Activated CD4-positive, alpha-beta T cell treated with anti-CD3 and anti-CD28 coated beads for 36 hours (primary cell): ENCODE measurements at regions of chr22 and their contacts with region 1.

Region 1: GRCh38 chr22:31329453-31330215 is 16.5 kb downstream of the PATZ1 start:
- DNase-seq: no peak
- ATAC-seq: peak; percentile 98
- H3K4me3 Mint-ChIP-seq: no peak overlapping the region
- H3K27ac Mint-ChIP-seq: peak overlapping the region; percentile 71
- H3K4me1 Mint-ChIP-seq: peaks cover 24% of the 10 kb centered on the region
- H3K27me3 Mint-ChIP-seq: no peaks in the 10 kb centered on the region

Region 2: DNA sequence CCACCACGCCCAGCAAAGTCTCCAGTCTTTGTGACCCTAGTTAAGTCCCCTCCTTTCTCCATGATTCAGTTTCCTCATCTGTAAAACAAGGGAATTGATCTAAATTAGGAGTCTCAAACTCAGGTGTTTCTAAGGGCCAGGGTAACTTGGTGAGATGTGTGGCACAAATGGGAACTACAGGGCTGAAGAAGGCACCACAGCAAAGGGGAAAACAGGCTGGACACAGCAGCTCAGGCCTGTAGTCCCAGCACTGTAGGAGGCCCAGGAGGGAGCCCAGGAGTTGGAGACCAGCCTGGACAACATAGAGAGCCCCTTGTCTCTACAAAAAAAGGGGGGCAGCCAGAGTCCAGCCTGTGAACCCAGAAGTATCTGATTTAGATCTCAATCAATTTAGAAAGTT is 32.1 kb after region 1 on chr22:
- CTCF ChIA-PET with region 1: no interaction called
- POLR2A ChIA-PET with region 1: no interaction called
- intact Hi-C with region 1: loop called in 1 of 2 experiments (anchors 2 kb)
- DNase-seq: no peak
- ATAC-seq: no peak
- H3K4me3 Mint-ChIP-seq: no peak overlapping the region
- H3K27ac Mint-ChIP-seq: no peak overlapping the region
- H3K4me1 Mint-ChIP-seq: no peaks in the 10 kb centered on the region
- H3K27me3 Mint-ChIP-seq: no peaks in the 10 kb centered on the region

Region 3: GRCh38 chr22:31425331-31426050 is 95.9 kb after region 1 on chr22:
- CTCF ChIA-PET with region 1: no interaction called
- POLR2A ChIA-PET with region 1: no interaction called
- intact Hi-C with region 1: no loop called
- DNase-seq: no peak
- ATAC-seq: peak; percentile 50
- H3K4me3 Mint-ChIP-seq: no peak overlapping the region
- H3K27ac Mint-ChIP-seq: peak overlapping the region; percentile 29
- H3K4me1 Mint-ChIP-seq: peaks cover 2% of the 10 kb centered on the region
- H3K27me3 Mint-ChIP-seq: no peaks in the 10 kb centered on the region